ENCODE measurements at regions of chr10 and their contacts with region 1.

Region 1: GRCh38 chr10:60662917-60663614 is 115.2 kb upstream of the CDK1 start:
- H3K4me3 Mint-ChIP-seq: no peak overlapping the region
- H3K27ac Mint-ChIP-seq: peak overlapping the region; percentile 60
- H3K4me1 Mint-ChIP-seq: peaks cover 32% of the 10 kb centered on the region
- H3K27me3 Mint-ChIP-seq: peaks cover 2% of the 10 kb centered on the region

Region 2: GRCh38 chr10:60778214-60779029 is 115.4 kb after region 1 on chr10 and contains the start of gene CDK1:
- intact Hi-C with region 1: loop called (anchors 10 kb)
- H3K4me3 Mint-ChIP-seq: peak within 1 kb of the TSS; percentile 98
- H3K27ac Mint-ChIP-seq: peak within 1 kb of the TSS; percentile 79
- H3K4me1 Mint-ChIP-seq: peaks cover 9% of the 10 kb centered on the region
- H3K27me3 Mint-ChIP-seq: peaks cover 1% of the 10 kb centered on the region

Region 3: DNA sequence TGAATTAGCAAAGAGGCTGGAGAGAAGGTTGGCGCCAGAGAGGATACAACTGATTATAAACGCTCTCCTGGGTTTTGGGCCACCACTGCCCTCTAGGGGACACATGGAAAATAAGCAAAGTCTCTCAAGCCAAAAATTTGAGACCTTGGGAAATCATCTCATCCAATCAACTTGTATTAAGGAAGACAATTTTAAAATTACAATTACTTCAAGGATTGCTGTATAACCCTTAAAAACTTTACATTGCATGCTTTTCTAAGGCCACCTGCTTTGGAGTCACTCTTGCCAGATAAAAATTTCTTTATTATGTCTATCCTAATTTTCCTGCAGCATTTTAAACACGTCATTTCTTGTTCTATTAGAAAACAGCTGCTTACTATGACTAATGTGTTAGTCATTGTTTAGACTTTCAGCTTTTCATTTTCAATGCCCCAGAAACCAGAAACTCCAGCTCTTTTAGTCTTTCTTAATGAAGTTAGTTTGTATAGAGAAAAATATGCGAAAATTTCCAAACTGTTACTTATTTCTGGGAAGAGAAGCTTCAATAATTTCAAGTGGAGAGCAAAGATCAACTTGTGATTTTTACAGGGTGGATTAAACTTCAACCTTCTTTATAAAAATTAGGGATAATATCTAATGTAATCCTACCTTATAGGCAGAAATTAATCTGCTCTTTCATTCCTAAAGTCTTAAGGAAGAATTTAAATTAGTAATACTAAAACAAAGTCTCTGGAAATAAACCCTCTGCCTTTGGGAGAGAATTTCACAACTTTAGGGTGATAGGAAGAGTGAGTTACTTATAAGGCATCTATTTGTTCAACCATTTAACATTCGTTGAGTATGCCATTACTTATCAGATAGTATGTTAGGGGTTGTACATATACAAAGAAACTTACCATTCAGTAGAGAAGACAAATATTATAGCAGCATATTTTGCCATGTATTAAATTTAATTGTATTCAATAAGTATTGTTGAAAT is 301.5 kb after region 1 on chr10:
- intact Hi-C with region 1: loop called (anchors 10 kb)
- H3K4me3 Mint-ChIP-seq: no peak overlapping the region
- H3K27ac Mint-ChIP-seq: no peak overlapping the region
- H3K4me1 Mint-ChIP-seq: peaks cover 34% of the 10 kb centered on the region
- H3K27me3 Mint-ChIP-seq: peaks cover 8% of the 10 kb centered on the region

Region 4: DNA sequence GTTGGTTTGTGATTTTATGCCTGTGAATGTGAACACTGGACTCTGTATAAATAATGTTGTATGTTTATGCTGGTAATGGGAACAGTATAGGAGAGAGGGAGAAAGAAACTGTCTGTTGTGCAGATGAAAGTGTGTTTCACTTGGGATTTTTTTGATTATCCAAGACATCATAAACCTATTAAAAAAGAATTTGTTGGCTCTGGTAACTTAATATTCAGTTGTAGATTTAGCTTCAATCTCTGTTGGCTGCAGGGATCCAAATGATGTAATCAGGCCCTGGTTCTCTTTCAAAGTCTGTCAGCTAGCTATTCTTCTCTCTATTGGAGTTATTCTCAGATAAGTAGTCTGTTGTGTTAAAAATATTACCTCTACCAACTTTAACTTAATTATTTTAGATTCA is 449.7 kb after region 1 on chr10:
- intact Hi-C with region 1: no loop called
- H3K4me3 Mint-ChIP-seq: no peak overlapping the region
- H3K27ac Mint-ChIP-seq: no peak overlapping the region
- H3K4me1 Mint-ChIP-seq: no peaks in the 10 kb centered on the region
- H3K27me3 Mint-ChIP-seq: no peaks in the 10 kb centered on the region

Region 5: DNA sequence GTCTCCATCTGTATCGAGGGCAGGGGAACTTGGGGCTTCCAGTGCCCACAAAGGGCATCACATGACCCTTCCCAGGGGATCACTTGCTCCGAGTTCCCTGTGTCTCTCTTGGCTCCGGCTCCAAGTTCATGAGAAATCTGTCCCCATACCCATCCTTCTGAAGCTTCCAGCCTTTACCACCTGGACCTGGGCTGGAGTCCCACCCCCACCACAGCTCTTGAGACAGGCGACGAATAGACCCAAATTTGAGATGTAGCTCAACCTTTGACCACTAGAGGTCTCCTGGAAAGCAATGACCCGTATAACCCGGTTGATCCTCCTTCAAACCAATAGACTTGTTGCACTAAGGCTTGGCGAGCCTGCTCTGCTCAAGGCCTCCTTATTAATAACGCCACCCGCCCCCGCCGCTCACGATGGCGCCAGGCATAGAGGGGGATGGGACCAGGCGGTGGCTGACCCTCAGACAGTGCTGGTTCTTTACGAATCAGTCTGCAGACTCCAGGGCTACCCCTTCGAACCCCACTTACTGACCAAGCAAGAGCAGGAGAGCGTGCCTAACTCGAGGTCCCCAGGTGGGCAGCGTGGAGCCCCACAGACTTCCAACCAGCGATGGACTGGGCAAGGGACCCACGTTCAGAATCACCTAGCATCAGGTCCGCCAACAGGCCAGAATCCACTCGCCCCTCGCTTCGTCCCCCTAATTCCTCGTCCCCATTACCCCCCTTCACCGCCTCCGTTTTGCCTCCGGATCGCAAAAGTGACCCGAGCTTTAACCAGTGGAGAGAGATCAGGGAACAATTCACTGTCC is 1234.0 kb after region 1 on chr10:
- intact Hi-C with region 1: loop called (anchors 5 kb)
- H3K4me3 Mint-ChIP-seq: peak overlapping the region; percentile 66
- H3K27ac Mint-ChIP-seq: peak overlapping the region; percentile 72
- H3K4me1 Mint-ChIP-seq: peaks cover 29% of the 10 kb centered on the region
- H3K27me3 Mint-ChIP-seq: no peaks in the 10 kb centered on the region